ENCODE measurements at regions of chr1 and their contacts with region 1.

Region 1: DNA sequence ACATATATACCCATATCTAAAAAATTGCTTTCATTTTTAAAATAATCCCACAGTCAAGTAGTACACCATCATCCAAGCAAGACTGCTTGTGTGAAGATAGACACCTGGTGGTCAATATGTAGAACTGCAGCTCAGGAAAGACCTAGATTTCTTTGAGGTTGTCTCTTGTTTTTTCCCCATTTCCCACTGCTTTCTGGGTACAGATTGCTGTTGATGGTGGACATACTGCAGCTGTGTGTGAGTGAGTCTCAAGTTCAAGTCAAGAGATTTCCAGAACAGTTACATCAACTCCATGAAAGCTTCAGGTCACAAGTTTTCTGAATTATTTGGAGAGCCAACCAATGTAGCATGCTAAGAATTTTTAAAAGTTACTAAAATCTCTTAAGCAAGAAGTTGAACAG is 306.4 kb downstream of the DUSP10 start:
- DNase-seq: no peak
- H3K4me3 ChIP-seq: no peak overlapping the region
- H3K27me3 ChIP-seq: no peaks in the 10 kb centered on the region
- CTCF ChIP-seq: peak; percentile 86

Region 2: GRCh38 chr1:220810179-220810653 is 625.3 kb before region 1 on chr1:
- CTCF ChIA-PET with region 1: interaction called, 27 read pairs
- POLR2A ChIA-PET with region 1: no interaction called
- DNase-seq: no peak
- H3K4me3 ChIP-seq: no peak overlapping the region
- H3K27me3 ChIP-seq: peaks cover 2% of the 10 kb centered on the region; the same call in 1 of the 2 replicates
- CTCF ChIP-seq: peak; percentile 96

Region 3: GRCh38 chr1:220873868-220874655 is 561.4 kb before region 1 on chr1:
- CTCF ChIA-PET with region 1: interaction called, 38 read pairs
- POLR2A ChIA-PET with region 1: no interaction called
- DNase-seq: no peak
- H3K4me3 ChIP-seq: no peak overlapping the region
- H3K27me3 ChIP-seq: no peaks in the 10 kb centered on the region
- CTCF ChIP-seq: peak; percentile 71

Region 4: DNA sequence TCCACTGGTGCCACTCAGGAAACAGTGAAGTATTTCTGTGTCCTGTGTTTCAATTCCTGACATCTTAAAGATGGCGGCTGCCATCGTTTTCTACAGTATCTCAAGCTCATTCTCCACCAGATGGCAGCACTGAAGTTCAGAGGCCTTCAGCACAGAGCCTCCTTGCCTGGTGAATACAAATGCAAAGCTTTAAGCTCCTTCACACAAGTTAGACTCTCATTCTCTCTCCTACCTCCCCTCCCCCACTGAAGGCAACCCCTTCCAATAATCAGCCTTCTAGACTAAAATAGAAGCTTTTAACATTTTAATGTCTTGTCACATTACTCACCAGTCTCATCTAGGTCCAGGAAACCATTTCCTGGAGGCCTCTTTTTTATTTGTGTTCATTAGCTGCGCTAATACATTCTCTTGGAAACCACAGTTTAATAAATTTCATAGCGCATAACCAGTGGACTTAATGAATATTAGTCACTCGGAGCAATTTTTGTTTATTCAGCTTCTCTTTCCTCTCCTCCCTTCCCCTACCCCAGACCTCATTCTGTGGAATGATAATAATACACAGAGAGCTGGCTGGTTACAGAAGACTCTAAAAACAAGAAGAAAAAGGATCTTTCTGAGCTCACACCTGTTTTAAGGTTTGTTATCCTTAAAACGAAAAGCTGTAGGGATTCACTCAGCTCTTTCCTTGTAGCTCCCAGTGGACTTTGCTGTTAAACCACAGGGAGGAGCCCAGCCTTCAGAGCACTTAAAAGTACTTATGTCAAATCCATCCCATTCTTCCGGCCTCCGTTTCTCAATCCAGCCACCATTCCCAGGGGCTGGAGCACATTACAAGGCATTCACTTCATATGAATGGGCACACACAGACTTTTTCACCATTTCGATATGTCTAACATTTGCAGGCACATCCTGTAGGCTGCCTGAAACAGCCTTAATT is 171.4 kb before region 1 on chr1:
- CTCF ChIA-PET with region 1: interaction called, 129 read pairs
- POLR2A ChIA-PET with region 1: interaction called, 3 read pairs
- DNase-seq: peak; percentile 51
- H3K4me3 ChIP-seq: no peak overlapping the region
- H3K27me3 ChIP-seq: no peaks in the 10 kb centered on the region
- CTCF ChIP-seq: peak; percentile 73

Region 5: GRCh38 chr1:221672239-221672645 is 236.7 kb after region 1 on chr1:
- CTCF ChIA-PET with region 1: no interaction called
- POLR2A ChIA-PET with region 1: no interaction called
- DNase-seq: no peak
- H3K4me3 ChIP-seq: no peak overlapping the region
- H3K27me3 ChIP-seq: no peaks in the 10 kb centered on the region
- CTCF ChIP-seq: no peak

Measured in BJ (cell line).